ENCODE measurements at regions of chr7 and their contacts with region 1.

Region 1: GRCh38 chr7:14717816-14718215 is 184.7 kb downstream of the DGKB start:
- DNase-seq: no peak
- H3K4me3 ChIP-seq: no peak overlapping the region
- H3K27ac ChIP-seq: no peak overlapping the region
- H3K4me1 ChIP-seq: no peaks in the 10 kb centered on the region
- H3K27me3 ChIP-seq: no peaks in the 10 kb centered on the region
- CTCF ChIP-seq: peak; percentile 77

Region 2: DNA sequence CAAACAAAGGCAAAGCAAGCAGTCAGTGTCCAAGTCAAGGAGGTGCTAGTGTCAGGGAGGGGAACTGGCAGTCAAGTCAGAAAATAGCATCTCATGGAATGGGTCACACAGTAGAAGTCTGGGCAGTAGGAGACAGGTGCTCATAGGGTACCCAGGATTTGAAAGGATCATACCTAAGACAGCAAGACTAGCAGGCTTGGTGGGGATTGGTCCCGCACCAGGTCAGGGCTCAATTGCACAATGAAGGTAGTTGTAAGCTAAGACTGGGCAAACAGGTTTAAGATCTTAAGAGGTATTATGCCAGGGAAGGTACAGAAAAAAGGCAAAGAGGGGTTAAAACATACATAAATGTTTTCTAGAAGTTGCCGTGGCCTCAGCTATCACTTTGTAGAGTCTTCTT is 546.9 kb before region 1 on chr7:
- CTCF ChIA-PET with region 1: no interaction called
- POLR2A ChIA-PET with region 1: no interaction called
- intact Hi-C with region 1: no loop called
- DNase-seq: peak in 1 of 2 experiments; percentile 48
- H3K4me3 ChIP-seq: no peak overlapping the region
- H3K27ac ChIP-seq: no peak overlapping the region
- H3K4me1 ChIP-seq: no peaks in the 10 kb centered on the region
- H3K27me3 ChIP-seq: no peaks in the 10 kb centered on the region
- CTCF ChIP-seq: no peak

Region 3: DNA sequence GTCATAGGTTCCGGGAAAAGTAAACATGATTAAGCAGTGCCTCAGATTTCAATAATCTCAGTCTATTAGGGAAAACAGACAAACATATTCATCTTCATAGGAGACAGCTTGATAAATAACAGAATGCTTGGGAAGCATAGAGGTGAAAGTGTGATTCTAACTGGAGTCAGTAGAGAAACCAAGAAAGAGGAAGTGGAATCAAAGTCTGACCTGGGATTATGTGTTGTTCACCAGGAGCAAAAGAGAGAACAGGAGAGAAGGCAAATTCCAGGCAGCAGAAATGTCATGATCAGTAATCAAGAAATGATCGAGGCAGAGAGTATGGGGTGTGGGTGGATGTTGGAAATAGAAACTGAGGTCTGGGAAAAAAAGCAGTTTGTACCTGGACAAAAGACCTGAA is 141.1 kb after region 1 on chr7:
- CTCF ChIA-PET with region 1: no interaction called
- POLR2A ChIA-PET with region 1: no interaction called
- intact Hi-C with region 1: no loop called
- DNase-seq: no peak
- H3K4me3 ChIP-seq: no peak overlapping the region
- H3K27ac ChIP-seq: no peak overlapping the region
- H3K4me1 ChIP-seq: no peaks in the 10 kb centered on the region
- H3K27me3 ChIP-seq: no peaks in the 10 kb centered on the region
- CTCF ChIP-seq: no peak

Region 4: GRCh38 chr7:14924398-14924797 is 206.6 kb after region 1 on chr7:
- CTCF ChIA-PET with region 1: no interaction called
- POLR2A ChIA-PET with region 1: no interaction called
- intact Hi-C with region 1: loop called (anchors 5 kb)
- DNase-seq: no peak
- H3K4me3 ChIP-seq: no peak overlapping the region
- H3K27ac ChIP-seq: no peak overlapping the region
- H3K4me1 ChIP-seq: no peaks in the 10 kb centered on the region
- H3K27me3 ChIP-seq: no peaks in the 10 kb centered on the region
- CTCF ChIP-seq: no peak

Region 5: GRCh38 chr7:16071246-16071857 is 1353.5 kb after region 1 on chr7:
- CTCF ChIA-PET with region 1: interaction called, 6 read pairs
- POLR2A ChIA-PET with region 1: no interaction called
- intact Hi-C with region 1: loop called (anchors 1 kb)
- DNase-seq: peak; percentile 16 to 57
- H3K4me3 ChIP-seq: no peak overlapping the region
- H3K27ac ChIP-seq: no peak overlapping the region
- H3K4me1 ChIP-seq: no peaks in the 10 kb centered on the region
- H3K27me3 ChIP-seq: no peaks in the 10 kb centered on the region
- CTCF ChIP-seq: peak; percentile 95